Heart right ventricle (tissue), 16 donors: ENCODE measurements at regions of chr7 and their contacts with region 1.

Region 1: DNA sequence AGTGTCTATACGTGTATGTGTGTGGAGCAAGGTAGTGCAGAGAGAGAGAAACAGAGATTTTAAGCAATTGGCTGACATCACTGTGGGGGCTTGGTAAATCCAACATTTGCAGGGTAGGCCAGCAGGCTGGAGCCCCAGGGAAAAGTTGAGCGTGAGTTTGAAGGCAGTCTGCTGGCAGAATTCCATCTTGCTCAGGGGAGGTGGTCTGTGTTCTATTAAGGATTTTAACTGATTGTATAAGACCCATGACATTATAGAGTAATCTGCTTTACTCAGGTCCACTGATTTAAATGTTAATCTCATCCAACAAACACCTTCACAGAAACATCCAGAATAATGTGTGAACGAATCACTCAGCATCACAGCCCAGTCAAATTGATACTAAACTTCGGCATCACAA is 912.9 kb downstream of the GRM8 start:
- DNase-seq: no peak
- ATAC-seq: no peak
- H3K4me3 ChIP-seq: no peak overlapping the region
- H3K27ac ChIP-seq: no peak overlapping the region
- H3K4me1 ChIP-seq: no peaks in the 10 kb centered on the region
- H3K27me3 ChIP-seq: no peaks in the 10 kb centered on the region
- CTCF ChIP-seq: no peak

Region 2: GRCh38 chr7:126398285-126398684 is 58.5 kb after region 1 on chr7:
- intact Hi-C with region 1: loop called in 1 of 10 experiments (anchors 10 kb)
- DNase-seq: no peak
- ATAC-seq: peak in 2 of 8 donors; percentile 54 to 60
- H3K4me3 ChIP-seq: no peak overlapping the region
- H3K27ac ChIP-seq: peak overlapping the region in 5 of 10 donors; percentile 33 to 64 (median 52)
- H3K4me1 ChIP-seq: peaks cover 0 to 17% (median 3%) of the 10 kb centered on the region in 9 donors
- H3K27me3 ChIP-seq: no peaks in the 10 kb centered on the region
- CTCF ChIP-seq: no peak